ENCODE measurements at regions of chr9 and their contacts with region 1.

Region 1: DNA sequence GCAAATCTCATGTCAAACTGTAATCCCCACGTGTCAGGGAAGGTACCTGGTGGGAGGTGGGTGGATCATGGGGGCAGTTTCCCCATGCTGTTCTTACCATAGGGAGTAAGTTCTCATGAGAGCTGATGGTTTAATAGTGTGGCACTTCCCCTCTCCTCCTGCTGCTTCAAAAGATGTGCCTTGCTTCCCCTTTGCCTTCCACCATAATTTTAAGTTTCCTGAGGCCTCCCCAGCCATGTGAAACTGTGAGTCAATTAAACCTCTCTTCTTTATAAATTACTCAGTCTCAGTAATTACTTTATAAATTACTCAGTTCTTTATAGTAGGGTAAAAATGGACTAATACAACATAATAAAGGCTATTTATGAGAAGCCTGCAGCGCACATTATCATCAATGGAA is 7.1 kb upstream of the CNTRL start:
- DNase-seq: no peak
- ATAC-seq: no peak
- H3K4me3 ChIP-seq: no peak overlapping the region
- H3K27ac ChIP-seq: no peak overlapping the region
- H3K4me1 ChIP-seq: peaks cover 11% of the 10 kb centered on the region
- H3K27me3 ChIP-seq: no peaks in the 10 kb centered on the region
- CTCF ChIP-seq: no peak
- EP300 ChIP-seq: no peak
- POLR2A ChIP-seq: no peak
- RAD21 ChIP-seq: no peak

Region 2: DNA sequence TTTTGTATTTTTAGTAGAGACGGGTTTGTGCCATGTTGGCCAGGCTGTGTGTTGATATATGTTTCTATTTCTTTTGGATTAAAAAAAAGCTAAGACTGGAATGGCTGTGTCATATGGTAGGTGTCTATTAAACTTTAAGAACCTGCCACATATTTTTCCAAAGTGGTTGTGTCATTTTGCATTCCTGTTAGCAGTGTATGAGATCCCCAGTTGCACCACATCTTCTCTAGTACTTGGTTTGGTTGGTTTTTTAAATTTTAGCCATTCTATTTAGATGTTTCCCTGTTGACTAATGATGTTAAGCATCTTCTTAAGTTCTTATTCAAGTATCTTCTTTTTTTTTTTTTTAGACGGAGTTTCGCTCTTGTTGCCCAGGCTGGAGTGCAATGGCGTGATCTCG is 317.2 kb before region 1 on chr9:
- CTCF ChIA-PET with region 1: interaction called, 109 read pairs
- POLR2A ChIA-PET with region 1: no interaction called
- RAD21 ChIA-PET with region 1: interaction called, 13 read pairs
- SMC1A ChIA-PET with region 1: interaction called, 73 read pairs
- in situ Hi-C with region 1: loop called (anchors 5 kb)
- intact Hi-C with region 1: no loop called
- DNase-seq: no peak
- ATAC-seq: no peak
- H3K4me3 ChIP-seq: no peak overlapping the region
- H3K27ac ChIP-seq: no peak overlapping the region
- H3K4me1 ChIP-seq: peaks cover 4% of the 10 kb centered on the region; the same call in 1 of the 2 replicates
- H3K27me3 ChIP-seq: no peaks in the 10 kb centered on the region
- CTCF ChIP-seq: no peak
- EP300 ChIP-seq: no peak
- POLR2A ChIP-seq: no peak
- RAD21 ChIP-seq: no peak

Region 3: DNA sequence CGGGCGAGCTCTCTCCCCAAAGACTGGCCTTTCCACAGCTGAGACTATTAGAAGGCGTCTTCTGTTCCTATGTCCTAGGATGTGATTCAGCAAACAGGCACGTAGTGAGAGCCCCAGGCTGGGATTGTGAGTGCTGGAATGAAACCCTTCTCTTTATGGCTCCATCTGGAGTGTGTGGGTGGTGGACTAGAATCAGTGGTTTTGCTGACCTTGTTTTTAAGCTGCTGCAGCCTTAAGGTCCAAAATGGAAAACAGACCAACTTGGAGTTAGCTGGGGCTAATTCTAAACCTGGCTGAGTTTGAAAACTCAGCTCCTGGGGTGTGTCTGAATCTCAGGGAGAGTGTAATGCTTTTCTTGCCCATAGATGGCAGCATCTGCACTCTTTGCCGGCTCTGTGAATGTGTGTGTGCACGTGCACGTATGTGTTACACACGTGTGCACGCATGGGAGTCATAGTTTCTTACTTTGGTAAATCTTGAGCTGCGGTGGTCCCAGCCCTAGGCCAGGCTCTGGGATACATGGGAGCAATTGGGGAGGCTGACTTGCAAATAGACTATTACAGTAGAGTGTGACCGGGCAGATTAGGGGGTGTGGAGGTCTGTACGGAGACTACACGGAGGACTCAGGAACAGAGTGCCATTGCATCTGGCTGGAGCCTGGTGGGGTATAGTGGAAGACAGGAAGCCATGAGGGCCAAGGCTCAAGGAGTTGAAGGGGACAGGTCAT is 211.1 kb after region 1 on chr9:
- CTCF ChIA-PET with region 1: no interaction called
- POLR2A ChIA-PET with region 1: no interaction called
- RAD21 ChIA-PET with region 1: no interaction called
- SMC1A ChIA-PET with region 1: no interaction called
- in situ Hi-C with region 1: no loop called
- intact Hi-C with region 1: no loop called
- DNase-seq: peak; percentile 11
- ATAC-seq: peak; percentile 95
- H3K4me3 ChIP-seq: no peak overlapping the region
- H3K27ac ChIP-seq: no peak overlapping the region
- H3K4me1 ChIP-seq: peaks cover 5% of the 10 kb centered on the region; the same call in 1 of the 2 replicates
- H3K27me3 ChIP-seq: no peaks in the 10 kb centered on the region
- CTCF ChIP-seq: peak; percentile 60 to 79 (median 62)
- EP300 ChIP-seq: no peak
- POLR2A ChIP-seq: no peak
- RAD21 ChIP-seq: peak; percentile 48

Measured in GM12878 (cell line).